Activated naive CD8-positive, alpha-beta T cell treated with anti-CD3 and anti-CD28 coated beads, Interleukin-2, amount 10 ng/mL, durations not matched to agents 7 days and 5 days (primary cell): ENCODE measurements at regions of chr17 and their contacts with region 1.

Region 1: GRCh38 chr17:76515274-76515949 is 14.2 kb upstream of the RHBDF2 start:
- DNase-seq: peak; percentile 75
- ATAC-seq: peak; percentile 84
- H3K4me3 Mint-ChIP-seq: peak overlapping the region; percentile 79
- H3K27ac Mint-ChIP-seq: peak overlapping the region; percentile 97
- H3K4me1 Mint-ChIP-seq: peaks cover 38% of the 10 kb centered on the region
- H3K27me3 Mint-ChIP-seq: peaks cover 3% of the 10 kb centered on the region

Region 2: DNA sequence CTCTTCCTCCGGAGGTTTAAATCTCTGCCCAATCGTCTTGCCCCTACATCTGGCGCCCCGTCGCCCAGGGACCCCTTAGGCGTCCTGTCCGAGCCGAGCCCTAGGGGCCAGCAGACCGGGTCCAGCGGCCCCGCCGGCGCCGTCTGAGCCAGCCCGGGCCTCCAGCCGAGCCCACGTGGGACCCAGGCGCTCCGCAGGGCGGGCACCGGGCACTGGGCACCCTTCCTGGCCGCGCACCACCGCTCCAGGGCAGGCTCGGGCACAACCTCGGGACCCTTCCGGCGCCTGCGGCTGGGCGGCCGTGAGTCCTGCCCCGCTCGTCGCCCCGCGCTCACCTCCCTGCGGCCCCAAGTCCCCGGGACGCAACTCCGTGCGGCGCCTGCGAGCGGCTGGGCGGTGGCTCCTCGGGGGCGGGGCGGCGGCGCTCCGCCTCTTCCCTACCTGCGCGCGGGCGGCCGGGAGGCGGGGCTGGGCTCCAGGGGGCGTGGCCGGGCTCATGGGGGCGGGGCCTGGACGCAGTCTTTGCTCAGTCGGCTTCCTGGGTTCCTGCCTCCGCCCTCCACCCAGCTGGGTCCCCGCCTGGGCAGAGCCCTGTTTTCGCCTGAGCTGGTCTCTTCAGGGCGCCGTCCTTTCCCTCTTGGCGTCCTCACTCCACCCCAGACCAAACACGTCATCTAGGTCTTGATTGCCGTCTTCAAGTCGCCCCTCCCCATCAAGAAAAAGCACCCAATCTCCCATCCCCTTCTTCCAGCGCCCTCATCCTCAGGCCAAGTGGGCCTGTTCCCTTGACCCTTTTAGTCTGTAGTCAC is 14.2 kb before region 1 on chr17 and contains the start of gene RHBDF2:
- POLR2A ChIA-PET with region 1: interaction called, 23 read pairs
- DNase-seq: peak; percentile 100
- ATAC-seq: peak; percentile 90
- H3K4me3 Mint-ChIP-seq: peak within 1 kb of the TSS; percentile 91
- H3K27ac Mint-ChIP-seq: peak within 1 kb of the TSS; percentile 95
- H3K4me1 Mint-ChIP-seq: peaks cover 37% of the 10 kb centered on the region
- H3K27me3 Mint-ChIP-seq: no peaks in the 10 kb centered on the region
- total RNA-seq, gene RHBDF2: 65.1 to 67.2 TPM